H1 (cell line): ENCODE measurements at regions of chr2 and their contacts with region 1.

Region 1: GRCh38 chr2:106876699-106877098 is 9.3 kb downstream of the ST6GAL2 start:
- DNase-seq: no peak
- H3K4me3 ChIP-seq: no peak overlapping the region
- H3K27ac ChIP-seq: no peak overlapping the region
- H3K4me1 ChIP-seq: 0 out of 7 replicates have a peak, but pooled peaks cover 0 to 2% (median 0%) of the 10 kb centered on the region in 4 experiments
- H3K27me3 ChIP-seq: no peaks in the 10 kb centered on the region
- CTCF ChIP-seq: no peak
- EP300 ChIP-seq: no peak
- POLR2A ChIP-seq: no peak
- RAD21 ChIP-seq: no peak

Region 2: DNA sequence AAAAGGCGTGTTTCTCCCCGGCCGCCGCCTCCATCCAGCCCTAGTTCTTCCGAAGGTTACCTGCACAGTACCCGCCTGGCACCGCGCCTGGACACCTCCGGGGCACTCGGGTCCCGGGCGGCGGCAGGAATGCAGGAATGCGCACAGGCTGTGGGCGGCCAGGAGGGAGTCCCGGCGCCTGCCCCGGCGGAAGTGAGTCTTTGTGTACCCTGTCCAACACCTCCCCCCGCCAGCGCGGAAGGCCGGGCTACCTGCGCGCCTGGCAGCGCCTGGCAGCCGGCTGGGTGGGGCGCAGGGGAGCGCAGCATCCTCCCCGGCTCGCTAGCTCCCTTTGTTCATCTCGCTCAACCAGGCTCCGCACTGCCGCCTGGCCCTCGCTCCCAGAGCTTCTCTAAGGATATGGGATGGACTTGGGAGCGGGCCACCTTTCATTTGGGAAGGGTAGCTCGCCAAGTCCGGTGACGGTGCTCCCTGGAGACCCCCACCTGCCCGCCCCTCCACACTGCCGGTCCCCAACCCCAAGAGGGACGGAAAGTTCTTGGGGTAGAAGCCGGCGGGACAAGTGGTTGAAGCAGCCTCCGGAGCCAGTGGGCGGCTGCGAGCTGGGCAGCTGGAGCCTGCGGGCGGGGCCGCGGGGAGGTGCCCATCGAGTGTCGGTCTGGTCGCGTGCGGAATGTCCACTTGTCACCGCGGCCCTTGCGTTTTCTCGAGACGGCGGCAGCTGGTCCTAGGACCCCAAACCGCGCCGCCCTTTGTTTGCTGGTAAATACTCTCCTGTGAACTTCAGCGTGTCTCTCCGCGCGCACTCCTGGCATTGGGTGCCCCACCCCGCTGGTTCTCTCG is 10.4 kb after region 1 on chr2:
- CTCF ChIA-PET with region 1: interaction called, 3 read pairs
- POLR2A ChIA-PET with region 1: interaction called, 11 read pairs
- DNase-seq: peak; percentile 51 to 85
- H3K4me3 ChIP-seq: peak overlapping the region; percentile 74 to 78 (median 74)
- H3K27ac ChIP-seq: no peak overlapping the region
- H3K4me1 ChIP-seq: peaks cover 0 to 15% (median 6%) of the 10 kb centered on the region in 4 experiments; a peak in 5 of 7 replicates
- H3K27me3 ChIP-seq: peaks cover 0 to 22% (median 16%) of the 10 kb centered on the region in 4 experiments; a peak in 6 of 7 replicates
- CTCF ChIP-seq: no peak
- EP300 ChIP-seq: no peak; a peak in 1 of 3 replicates
- POLR2A ChIP-seq: peak in 1 of 2 experiments; percentile 65; a peak in 2 of 3 replicates
- RAD21 ChIP-seq: peak in 1 of 2 experiments; percentile 1; a peak in 1 of 4 replicates